K562 (cell line): ENCODE measurements at regions of chr10 and their contacts with region 1.

Region 1: GRCh38 chr10:133357285-133358151 is at the start of gene FUOM:
- DNase-seq: peak; percentile 73 to 95 (median 86)
- ATAC-seq: peak; percentile 83
- H3K4me3 ChIP-seq: peak within 1 kb of the TSS; percentile 66
- H3K27ac ChIP-seq: peak within 1 kb of the TSS; percentile 81
- H3K4me1 ChIP-seq: peaks cover 15 to 61% of the 10 kb centered on the region in 2 experiments
- H3K27me3 ChIP-seq: no peaks in the 10 kb centered on the region
- CTCF ChIP-seq: no peak
- EP300 ChIP-seq: no peak
- POLR2A ChIP-seq: peak; percentile 60; the same call in 1 of the 2 replicates
- RAD21 ChIP-seq: no peak
- polyA plus RNA-seq, gene FUOM: 1.8 to 14.4 TPM

Region 2: GRCh38 chr10:133050043-133050776 is 307.3 kb before region 1 on chr10:
- CTCF ChIA-PET with region 1: no interaction called
- POLR2A ChIA-PET with region 1: no interaction called
- in situ Hi-C with region 1: no loop called
- intact Hi-C with region 1: no loop called
- DNase-seq: no peak
- ATAC-seq: no peak
- H3K4me3 ChIP-seq: no peak overlapping the region
- H3K27ac ChIP-seq: no peak overlapping the region
- H3K4me1 ChIP-seq: no peaks in the 10 kb centered on the region; a peak in 2 of 5 replicates
- H3K27me3 ChIP-seq: peaks cover 5 to 55% of the 10 kb centered on the region in 2 experiments; a peak in 4 of 5 replicates
- CTCF ChIP-seq: no peak
- EP300 ChIP-seq: no peak
- POLR2A ChIP-seq: no peak
- RAD21 ChIP-seq: no peak

Region 3: DNA sequence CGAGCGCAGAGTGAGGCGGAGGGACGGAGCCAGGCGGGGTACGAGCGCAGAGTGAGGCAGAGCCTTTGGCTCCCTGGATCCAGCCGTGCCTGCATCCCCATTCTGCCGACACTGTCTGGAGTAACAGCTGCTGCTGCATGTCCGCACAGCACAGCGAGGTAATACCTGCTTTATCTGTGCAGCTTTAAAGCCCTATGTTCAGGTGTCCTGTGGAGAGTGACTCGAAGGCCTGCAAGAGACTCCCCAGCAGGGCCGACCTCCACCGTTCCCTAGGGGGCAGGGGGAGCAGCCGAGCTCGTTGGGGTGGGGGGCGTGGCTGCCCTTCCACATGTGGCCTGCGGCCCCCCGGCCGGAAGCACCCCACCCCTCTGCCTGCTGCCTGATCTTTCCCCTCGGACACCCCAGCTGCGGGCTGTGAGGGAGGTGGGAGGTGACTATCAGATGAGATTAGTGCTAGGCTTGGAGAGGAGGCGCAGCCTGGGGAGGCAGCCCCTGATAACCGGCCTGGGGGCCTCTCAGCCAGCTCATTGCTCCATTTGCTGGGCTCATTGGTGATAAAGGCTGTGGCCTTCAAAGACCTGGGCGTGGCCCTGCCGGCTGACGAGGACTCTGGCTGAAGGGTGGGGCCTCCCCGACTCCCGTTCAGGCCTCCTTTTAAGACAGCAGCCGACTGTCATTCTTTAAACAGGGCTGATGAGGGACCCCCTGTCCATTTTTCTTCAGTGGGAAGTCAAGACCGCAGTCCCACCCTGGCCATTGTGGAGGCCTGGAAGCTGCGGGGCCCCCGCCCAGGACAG is 111.9 kb before region 1 on chr10:
- CTCF ChIA-PET with region 1: no interaction called
- POLR2A ChIA-PET with region 1: no interaction called
- in situ Hi-C with region 1: no loop called
- intact Hi-C with region 1: no loop called
- DNase-seq: peak; percentile 86 to 95 (median 90)
- ATAC-seq: peak; percentile 88
- H3K4me3 ChIP-seq: peak overlapping the region; percentile 17; the same call in 1 of the 2 replicates
- H3K27ac ChIP-seq: peak overlapping the region; percentile 79
- H3K4me1 ChIP-seq: peaks cover 36 to 96% of the 10 kb centered on the region in 2 experiments
- H3K27me3 ChIP-seq: no peaks in the 10 kb centered on the region; a peak in 1 of 5 replicates
- CTCF ChIP-seq: no peak
- EP300 ChIP-seq: peak; percentile 81; the same call in 1 of the 2 replicates
- POLR2A ChIP-seq: peak; percentile 54; the same call in 1 of the 2 replicates
- RAD21 ChIP-seq: no peak

Region 4: GRCh38 chr10:133373104-133373624 is 15.6 kb after region 1 on chr10 and contains the start of gene ECHS1:
- CTCF ChIA-PET with region 1: no interaction called
- POLR2A ChIA-PET with region 1: interaction called, 10 read pairs
- in situ Hi-C with region 1: no loop called
- intact Hi-C with region 1: no loop called
- DNase-seq: peak; percentile 92 to 96 (median 94)
- ATAC-seq: peak; percentile 100
- H3K4me3 ChIP-seq: peak within 1 kb of the TSS; percentile 57
- H3K27ac ChIP-seq: peak within 1 kb of the TSS; percentile 61; the same call in 2 of the 3 replicates
- H3K4me1 ChIP-seq: peaks cover 7 to 25% of the 10 kb centered on the region in 2 experiments; a peak in 3 of 5 replicates
- H3K27me3 ChIP-seq: no peaks in the 10 kb centered on the region
- CTCF ChIP-seq: peak in 1 of 3 experiments; percentile 12; a peak in 1 of 6 replicates
- EP300 ChIP-seq: no peak
- POLR2A ChIP-seq: peak; percentile 77
- RAD21 ChIP-seq: no peak
- polyA plus RNA-seq, gene ECHS1: 98.8 to 100 TPM

Region 5: GRCh38 chr10:133394064-133394663 is 36.6 kb after region 1 on chr10 and contains the start of gene MTG1:
- CTCF ChIA-PET with region 1: no interaction called
- POLR2A ChIA-PET with region 1: interaction called, 6 read pairs
- in situ Hi-C with region 1: no loop called
- intact Hi-C with region 1: loop called (anchors 5 kb)
- DNase-seq: peak; percentile 90 to 96 (median 92)
- ATAC-seq: peak; percentile 93
- H3K4me3 ChIP-seq: peak within 1 kb of the TSS; percentile 66
- H3K27ac ChIP-seq: peak within 1 kb of the TSS; percentile 98
- H3K4me1 ChIP-seq: peaks cover 17 to 57% of the 10 kb centered on the region in 2 experiments
- H3K27me3 ChIP-seq: no peaks in the 10 kb centered on the region
- CTCF ChIP-seq: peak in 2 of 3 experiments; percentile 35 to 42; a peak in 3 of 6 replicates
- EP300 ChIP-seq: no peak
- POLR2A ChIP-seq: peak; percentile 82
- RAD21 ChIP-seq: 0 out of 4 replicates have a peak, but pooled peaks of 1 of the 2 experiments have one; percentile 25
- polyA plus RNA-seq, gene MTG1: 2.8 to 3.0 TPM